A549 (cell line): ENCODE measurements at regions of chr12 and their contacts with region 1.

Region 1: GRCh38 chr12:96061864-96062453 is 26.6 kb upstream of the LTA4H start:
- DNase-seq: peak; percentile 77 to 87
- ATAC-seq: peak; percentile 92 to 97
- H3K4me3 ChIP-seq: no peak overlapping the region
- H3K27ac ChIP-seq: peak overlapping the region in 1 of 2 experiments; percentile 8; a peak in 1 of 6 replicates
- H3K4me1 ChIP-seq: no peaks in the 10 kb centered on the region
- CTCF ChIP-seq: peak; percentile 87
- EP300 ChIP-seq: no peak
- POLR2A ChIP-seq: no peak
- RAD21 ChIP-seq: peak; percentile 97 to 99

Region 2: GRCh38 chr12:96047229-96048211 is 14.4 kb before region 1 on chr12:
- CTCF ChIA-PET with region 1: interaction called, 12 read pairs
- POLR2A ChIA-PET with region 1: interaction called, 4 read pairs
- DNase-seq: peak; percentile 65 to 74
- ATAC-seq: peak; percentile 89 to 93
- H3K4me3 ChIP-seq: no peak overlapping the region
- H3K27ac ChIP-seq: peak overlapping the region; percentile 62 to 86
- H3K4me1 ChIP-seq: peaks cover 44% of the 10 kb centered on the region
- CTCF ChIP-seq: no peak
- EP300 ChIP-seq: peak in 1 of 2 experiments; percentile 11; a peak in 1 of 5 replicates
- POLR2A ChIP-seq: no peak
- RAD21 ChIP-seq: no peak

Region 3: GRCh38 chr12:96164951-96165811 is 103.2 kb after region 1 on chr12:
- CTCF ChIA-PET with region 1: no interaction called
- POLR2A ChIA-PET with region 1: no interaction called
- DNase-seq: no peak
- ATAC-seq: no peak
- H3K4me3 ChIP-seq: no peak overlapping the region
- H3K27ac ChIP-seq: no peak overlapping the region
- H3K4me1 ChIP-seq: no peaks in the 10 kb centered on the region
- CTCF ChIP-seq: no peak
- EP300 ChIP-seq: no peak
- POLR2A ChIP-seq: no peak
- RAD21 ChIP-seq: no peak

Region 4: DNA sequence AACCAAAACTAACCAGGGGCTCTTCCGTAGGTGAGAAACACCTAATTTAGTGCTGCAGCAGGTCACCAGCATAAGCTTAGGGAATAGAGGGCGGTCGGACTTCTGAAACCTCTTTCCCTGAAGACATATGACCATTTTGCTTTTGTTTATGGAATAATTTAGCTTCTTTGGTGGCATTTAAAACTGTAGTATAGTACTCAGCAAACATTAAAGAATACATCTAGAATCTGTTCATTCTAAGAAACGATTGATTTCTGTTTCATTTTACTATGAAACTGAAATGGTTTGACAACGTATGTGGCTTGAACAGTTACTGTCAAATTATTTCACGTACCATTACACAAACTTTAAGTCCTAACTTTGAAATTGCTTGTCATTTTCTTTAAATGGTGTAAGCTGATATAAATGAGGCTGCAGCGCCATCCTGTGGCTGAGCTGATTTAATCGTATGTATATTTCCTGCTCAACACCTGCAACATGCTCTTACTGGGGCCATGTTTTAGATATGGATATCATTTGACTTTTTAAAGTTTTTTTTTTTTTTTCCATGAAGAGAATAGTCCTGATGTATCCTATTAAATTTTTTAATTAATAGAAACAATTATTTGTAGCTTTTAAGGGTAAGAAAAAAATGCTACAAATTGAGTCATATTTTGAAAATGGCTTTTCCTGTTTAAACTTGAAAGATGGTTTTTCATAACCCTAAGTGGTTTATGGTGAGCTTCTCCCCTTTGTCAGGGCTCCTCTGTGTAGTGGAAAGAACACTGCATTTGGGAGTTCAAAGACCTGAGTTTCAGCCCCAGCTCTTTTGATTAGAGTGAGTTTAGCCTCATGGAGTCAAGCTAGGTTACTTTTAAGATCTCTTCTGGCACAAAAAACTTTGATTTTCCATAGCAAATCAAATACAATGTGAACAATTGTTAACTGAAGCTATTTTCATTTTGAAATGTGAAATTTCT is 454.8 kb after region 1 on chr12:
- CTCF ChIA-PET with region 1: interaction called, 90 read pairs
- POLR2A ChIA-PET with region 1: no interaction called
- DNase-seq: peak; percentile 56 to 84
- ATAC-seq: peak; percentile 80 to 90; a peak in 5 of 6 replicates
- H3K4me3 ChIP-seq: no peak overlapping the region
- H3K27ac ChIP-seq: no peak overlapping the region
- H3K4me1 ChIP-seq: peaks cover 9% of the 10 kb centered on the region; the same call in 1 of the 3 replicates
- CTCF ChIP-seq: peak; percentile 90
- EP300 ChIP-seq: no peak
- POLR2A ChIP-seq: no peak
- RAD21 ChIP-seq: peak; percentile 94 to 95